ENCODE measurements at regions of chr10 and their contacts with region 1.

Region 1: GRCh38 chr10:72364239-72364777 is 9.6 kb upstream of the DNAJB12 start:
- DNase-seq: peak; percentile 73 to 91
- H3K4me3 ChIP-seq: no peak overlapping the region
- H3K27ac ChIP-seq: no peak overlapping the region
- H3K4me1 ChIP-seq: peaks cover 0 to 2% (median under 1%) of the 10 kb centered on the region in 4 experiments; a peak in 1 of 7 replicates
- H3K27me3 ChIP-seq: no peaks in the 10 kb centered on the region
- CTCF ChIP-seq: peak; percentile 85 to 99 (median 87)
- EP300 ChIP-seq: no peak
- POLR2A ChIP-seq: peak in 1 of 2 experiments; percentile 44; a peak in 1 of 3 replicates
- RAD21 ChIP-seq: peak; percentile 97 to 98

Region 2: DNA sequence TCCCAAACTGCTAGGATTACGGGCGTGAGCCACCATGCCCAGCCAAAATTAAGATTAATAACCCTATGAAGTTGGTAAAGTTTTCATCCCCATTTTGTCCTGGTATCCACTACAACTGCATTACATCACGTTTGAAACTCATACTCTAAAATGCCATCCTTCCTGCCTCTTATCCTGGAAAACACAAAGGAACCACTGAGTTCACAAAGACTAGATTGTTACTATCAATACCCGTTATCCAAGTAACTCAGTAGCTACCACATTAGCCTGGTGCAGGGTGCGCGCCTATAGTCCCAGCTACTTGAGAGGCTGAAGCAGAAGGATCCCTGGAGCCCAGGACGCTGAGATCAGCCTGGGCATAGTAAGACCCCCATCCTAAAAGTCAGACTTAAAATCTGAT is 212.0 kb before region 1 on chr10:
- CTCF ChIA-PET with region 1: no interaction called
- POLR2A ChIA-PET with region 1: no interaction called
- DNase-seq: no peak
- H3K4me3 ChIP-seq: no peak overlapping the region
- H3K27ac ChIP-seq: no peak overlapping the region
- H3K4me1 ChIP-seq: no peaks in the 10 kb centered on the region
- H3K27me3 ChIP-seq: no peaks in the 10 kb centered on the region
- CTCF ChIP-seq: no peak
- EP300 ChIP-seq: no peak
- POLR2A ChIP-seq: no peak
- RAD21 ChIP-seq: no peak

Region 3: GRCh38 chr10:72834183-72834825 is 470.0 kb after region 1 on chr10:
- CTCF ChIA-PET with region 1: interaction called, 10 read pairs
- POLR2A ChIA-PET with region 1: interaction called, 3 read pairs
- DNase-seq: peak in 1 of 2 experiments; percentile 1
- H3K4me3 ChIP-seq: no peak overlapping the region
- H3K27ac ChIP-seq: no peak overlapping the region
- H3K4me1 ChIP-seq: peaks cover 0 to 2% (median 0%) of the 10 kb centered on the region in 4 experiments; a peak in 1 of 7 replicates
- H3K27me3 ChIP-seq: no peaks in the 10 kb centered on the region
- CTCF ChIP-seq: peak in 2 of 3 experiments; percentile 63 to 67; a peak in 3 of 4 replicates
- EP300 ChIP-seq: no peak
- POLR2A ChIP-seq: no peak
- RAD21 ChIP-seq: peak; percentile 93

Region 4: DNA sequence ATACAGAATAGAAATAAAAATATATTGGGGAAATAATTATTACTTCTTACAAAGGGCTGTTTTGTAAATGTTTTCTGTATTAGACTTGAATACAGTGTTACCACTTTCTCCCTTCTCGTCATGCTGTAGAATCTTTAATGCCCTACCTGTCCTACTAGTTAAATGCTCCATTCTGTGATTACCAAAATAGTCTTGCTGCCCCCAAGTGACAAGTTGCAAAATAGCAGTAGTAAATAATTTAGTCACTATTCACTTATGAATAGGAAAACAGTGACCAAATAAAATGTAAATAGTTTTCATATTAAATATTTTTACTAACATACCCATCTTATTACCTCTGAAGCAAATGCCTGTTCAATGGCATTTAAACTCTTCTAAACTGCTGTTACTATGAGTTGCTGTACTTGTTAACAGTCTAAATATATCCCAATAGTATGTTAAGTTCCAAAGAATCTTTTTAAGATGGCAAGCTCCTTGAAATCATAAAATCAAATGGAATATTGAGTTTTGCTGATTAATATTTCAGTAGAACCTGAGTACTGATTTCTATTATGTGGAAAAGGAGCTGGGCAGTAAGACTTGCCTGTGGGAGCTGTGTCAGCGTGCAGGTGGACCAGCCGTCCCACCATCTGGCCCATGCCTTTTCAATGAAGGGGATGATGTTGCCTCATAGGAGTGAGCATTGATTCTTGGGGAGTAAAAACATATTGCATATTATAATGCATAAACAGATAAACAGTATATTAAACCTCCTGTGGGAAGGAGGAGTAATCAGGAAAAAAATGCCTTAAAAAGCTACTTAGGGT is 511.1 kb after region 1 on chr10:
- CTCF ChIA-PET with region 1: interaction called, 12 read pairs
- POLR2A ChIA-PET with region 1: no interaction called
- DNase-seq: no peak
- H3K4me3 ChIP-seq: no peak overlapping the region
- H3K27ac ChIP-seq: no peak overlapping the region
- H3K4me1 ChIP-seq: no peaks in the 10 kb centered on the region
- H3K27me3 ChIP-seq: no peaks in the 10 kb centered on the region
- CTCF ChIP-seq: peak in 2 of 3 experiments; percentile 25 to 52; a peak in 2 of 4 replicates
- EP300 ChIP-seq: no peak
- POLR2A ChIP-seq: no peak
- RAD21 ChIP-seq: peak; percentile 74

Measured in H1 (cell line).